Caco-2 (cell line): ENCODE measurements at regions of chr12 and their contacts with region 1.

Region 1: DNA sequence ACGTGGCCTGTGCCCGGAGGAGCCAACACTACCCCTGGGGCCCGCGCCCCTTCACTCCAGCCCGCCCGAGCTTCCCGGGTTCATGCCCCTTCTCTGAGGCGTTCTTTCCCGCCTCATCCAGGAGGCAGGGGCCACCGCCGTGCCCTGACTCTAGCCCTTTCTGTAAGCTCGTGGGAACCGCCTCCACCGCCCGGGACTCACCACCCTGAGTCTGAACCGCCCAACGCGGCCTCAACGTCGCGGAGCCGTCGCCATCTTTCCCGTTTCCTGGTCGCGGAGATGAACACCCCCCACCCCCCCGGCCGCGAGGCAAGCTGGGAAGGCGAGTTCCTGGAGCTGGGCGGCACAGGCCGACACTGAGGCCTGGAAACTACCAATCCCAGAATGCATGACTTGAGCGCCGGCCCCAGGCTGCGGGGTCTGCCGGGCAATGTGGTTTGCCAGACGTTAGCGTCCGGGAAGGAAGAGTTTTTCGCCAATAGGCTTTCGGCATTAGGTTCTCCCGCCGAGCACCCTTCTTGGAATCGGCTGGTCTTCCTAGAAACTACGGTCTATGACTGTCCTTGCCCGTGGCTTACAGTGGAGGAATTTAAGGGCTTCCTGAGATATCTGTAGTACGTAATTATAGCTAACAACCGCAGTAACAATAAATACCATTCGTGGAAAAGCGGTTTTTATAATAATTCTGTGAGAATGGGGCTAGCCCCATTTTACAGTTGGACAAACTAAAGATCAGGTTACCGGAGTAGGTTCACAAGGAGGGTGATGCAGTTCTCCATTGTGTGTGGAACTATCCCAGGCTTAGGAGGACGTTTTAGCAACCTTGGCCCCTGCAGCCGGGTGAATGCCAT is at the start of gene DDX23:
- DNase-seq: peak; percentile 97
- H3K4me3 ChIP-seq: peak within 1 kb of the TSS; percentile 75
- H3K4me3 Mint-ChIP-seq: peak within 1 kb of the TSS; percentile 99
- H3K27ac Mint-ChIP-seq: peak within 1 kb of the TSS; percentile 99
- H3K4me1 ChIP-seq: peaks cover 8% of the 10 kb centered on the region
- H3K4me1 Mint-ChIP-seq: peaks cover 25% of the 10 kb centered on the region
- H3K27me3 ChIP-seq: no peaks in the 10 kb centered on the region
- H3K27me3 Mint-ChIP-seq: no peaks in the 10 kb centered on the region
- CTCF ChIP-seq: no peak
- total RNA-seq, gene DDX23: 151 and 152 TPM in 2 replicates

Region 2: DNA sequence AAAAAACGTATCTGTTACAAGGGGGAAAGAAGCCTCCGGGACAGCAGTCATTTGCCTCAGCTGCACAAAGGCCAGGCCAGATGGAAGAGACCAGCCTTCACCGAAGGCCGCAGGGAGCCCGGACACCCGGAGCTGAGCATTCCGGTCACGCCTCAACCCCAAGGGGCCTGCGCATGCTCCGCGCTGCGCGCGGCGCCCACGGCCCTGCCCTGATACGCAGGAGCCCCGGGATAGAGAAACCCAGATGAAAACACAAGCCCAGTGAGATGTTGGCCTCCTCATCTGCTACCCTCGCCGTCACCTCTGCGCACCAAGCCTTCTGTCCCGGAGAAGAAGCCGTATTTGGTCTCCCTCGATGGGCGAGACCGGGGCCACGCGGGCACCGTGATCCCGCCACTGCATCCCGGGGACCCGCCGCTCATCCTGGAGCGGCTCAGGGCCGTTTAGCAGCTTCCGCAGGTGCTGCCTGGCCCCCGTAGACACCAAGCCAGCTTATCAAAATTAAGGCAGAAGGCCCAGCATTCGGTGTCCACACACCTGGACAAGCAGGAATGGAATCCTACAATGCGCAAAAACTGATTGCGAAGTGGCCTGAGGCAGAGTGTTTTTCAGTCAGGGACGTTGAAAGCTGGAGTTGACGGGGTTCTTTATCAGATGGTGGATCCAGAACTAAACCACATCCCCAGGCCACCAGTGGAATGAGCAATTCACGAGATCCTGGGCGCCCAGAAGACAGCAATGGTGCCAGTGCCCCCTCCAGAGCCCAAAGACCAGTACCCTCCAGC is 324.0 kb before region 1 on chr12:
- CTCF ChIA-PET with region 1: no interaction called
- POLR2A ChIA-PET with region 1: no interaction called
- intact Hi-C with region 1: no loop called
- DNase-seq: no peak
- H3K4me3 ChIP-seq: no peak overlapping the region
- H3K4me3 Mint-ChIP-seq: no peak overlapping the region
- H3K27ac Mint-ChIP-seq: no peak overlapping the region
- H3K4me1 ChIP-seq: no peaks in the 10 kb centered on the region
- H3K4me1 Mint-ChIP-seq: no peaks in the 10 kb centered on the region
- H3K27me3 ChIP-seq: no peaks in the 10 kb centered on the region
- H3K27me3 Mint-ChIP-seq: peaks cover 11% of the 10 kb centered on the region
- CTCF ChIP-seq: no peak

Region 3: GRCh38 chr12:48814262-48815125 is 37.6 kb before region 1 on chr12:
- CTCF ChIA-PET with region 1: interaction called, 8 read pairs
- POLR2A ChIA-PET with region 1: interaction called, 4 read pairs
- intact Hi-C with region 1: loop called (anchors 2 kb)
- DNase-seq: peak; percentile 83 to 96
- H3K4me3 ChIP-seq: peak overlapping the region; percentile 91
- H3K4me3 Mint-ChIP-seq: peak overlapping the region; percentile 97
- H3K27ac Mint-ChIP-seq: peak overlapping the region; percentile 58
- H3K4me1 ChIP-seq: peaks cover 21% of the 10 kb centered on the region
- H3K4me1 Mint-ChIP-seq: peaks cover 18% of the 10 kb centered on the region
- H3K27me3 ChIP-seq: no peaks in the 10 kb centered on the region
- H3K27me3 Mint-ChIP-seq: no peaks in the 10 kb centered on the region
- CTCF ChIP-seq: peak; percentile 99

Region 4: GRCh38 chr12:48882315-48882687 is 30.2 kb after region 1 on chr12:
- CTCF ChIA-PET with region 1: interaction called, 50 read pairs
- POLR2A ChIA-PET with region 1: interaction called, 58 read pairs
- intact Hi-C with region 1: loop called (anchors 2 kb)
- DNase-seq: peak; percentile 48 to 60
- H3K4me3 ChIP-seq: no peak overlapping the region
- H3K4me3 Mint-ChIP-seq: peak overlapping the region; percentile 70
- H3K27ac Mint-ChIP-seq: peak overlapping the region; percentile 96
- H3K4me1 ChIP-seq: peaks cover 70% of the 10 kb centered on the region
- H3K4me1 Mint-ChIP-seq: peaks cover 68% of the 10 kb centered on the region
- H3K27me3 ChIP-seq: no peaks in the 10 kb centered on the region
- H3K27me3 Mint-ChIP-seq: no peaks in the 10 kb centered on the region
- CTCF ChIP-seq: no peak

Region 5: GRCh38 chr12:48936379-48936979 is 84.4 kb after region 1 on chr12:
- CTCF ChIA-PET with region 1: interaction called, 53 read pairs
- POLR2A ChIA-PET with region 1: interaction called, 3 read pairs
- intact Hi-C with region 1: loop called (anchors 1 kb)
- DNase-seq: peak; percentile 75 to 88
- H3K4me3 ChIP-seq: no peak overlapping the region
- H3K4me3 Mint-ChIP-seq: no peak overlapping the region
- H3K27ac Mint-ChIP-seq: no peak overlapping the region
- H3K4me1 ChIP-seq: no peaks in the 10 kb centered on the region
- H3K4me1 Mint-ChIP-seq: no peaks in the 10 kb centered on the region
- H3K27me3 ChIP-seq: no peaks in the 10 kb centered on the region
- H3K27me3 Mint-ChIP-seq: no peaks in the 10 kb centered on the region
- CTCF ChIP-seq: peak; percentile 94 to 98

Region 6: GRCh38 chr12:48988030-48988649 is 136.0 kb after region 1 on chr12:
- CTCF ChIA-PET with region 1: interaction called, 11 read pairs
- POLR2A ChIA-PET with region 1: interaction called, 7 read pairs
- intact Hi-C with region 1: no loop called
- DNase-seq: peak; percentile 67 to 81
- H3K4me3 ChIP-seq: no peak overlapping the region
- H3K4me3 Mint-ChIP-seq: no peak overlapping the region
- H3K27ac Mint-ChIP-seq: no peak overlapping the region
- H3K4me1 ChIP-seq: no peaks in the 10 kb centered on the region
- H3K4me1 Mint-ChIP-seq: no peaks in the 10 kb centered on the region
- H3K27me3 ChIP-seq: no peaks in the 10 kb centered on the region; the same call in 1 of the 2 replicates
- H3K27me3 Mint-ChIP-seq: peaks cover 18% of the 10 kb centered on the region
- CTCF ChIP-seq: peak; percentile 87 to 89

Region 7: GRCh38 chr12:49821373-49822287 is 969.5 kb after region 1 on chr12:
- CTCF ChIA-PET with region 1: no interaction called
- POLR2A ChIA-PET with region 1: no interaction called
- intact Hi-C with region 1: no loop called
- DNase-seq: no peak
- H3K4me3 ChIP-seq: no peak overlapping the region
- H3K4me3 Mint-ChIP-seq: no peak overlapping the region
- H3K27ac Mint-ChIP-seq: no peak overlapping the region
- H3K4me1 ChIP-seq: no peaks in the 10 kb centered on the region
- H3K4me1 Mint-ChIP-seq: no peaks in the 10 kb centered on the region
- H3K27me3 ChIP-seq: no peaks in the 10 kb centered on the region
- H3K27me3 Mint-ChIP-seq: no peaks in the 10 kb centered on the region
- CTCF ChIP-seq: no peak